ENCODE measurements at regions of chr1 and their contacts with region 1.

Region 1: DNA sequence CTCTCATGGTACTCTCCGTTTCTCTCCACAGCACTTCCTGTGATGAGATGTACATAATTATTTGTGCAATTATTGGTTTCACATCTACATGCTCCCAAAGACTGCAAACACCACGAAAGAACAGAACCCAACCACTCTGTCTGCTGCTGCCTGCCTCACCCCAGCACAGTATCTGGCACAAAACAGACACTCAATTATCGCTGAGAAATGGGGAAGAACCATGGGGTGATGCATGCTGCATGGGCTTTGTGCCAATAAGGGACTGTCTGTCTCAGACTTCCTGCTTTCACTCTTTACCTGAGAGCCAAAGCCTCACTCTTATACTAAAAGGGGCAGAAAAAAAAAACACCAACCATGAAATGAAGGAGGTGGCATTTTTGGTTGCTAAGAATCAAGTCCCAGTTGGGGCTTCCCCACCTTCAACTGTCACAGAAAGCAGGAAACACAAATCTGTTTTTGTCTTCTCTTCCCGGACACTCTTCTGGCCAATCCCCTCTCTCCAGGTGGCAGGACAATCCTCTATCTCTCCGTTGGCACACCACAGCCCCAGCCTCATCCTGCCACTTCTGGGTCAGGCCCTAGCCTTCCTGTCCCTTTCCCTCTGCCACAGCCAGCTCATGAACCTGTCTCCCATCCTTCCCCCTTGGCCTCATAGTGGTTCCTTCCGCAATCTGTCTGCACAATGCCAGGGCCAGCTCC is 82.0 kb downstream of the TGFBR3 start:
- DNase-seq: peak; percentile 45 to 96 (median 77)
- ATAC-seq: peak; percentile 55
- H3K4me3 ChIP-seq: peak overlapping the region; percentile 37 to 51
- H3K4me3 Mint-ChIP-seq: peak overlapping the region; percentile 70
- H3K27ac ChIP-seq: peak overlapping the region; percentile 98 to 99
- H3K27ac Mint-ChIP-seq: peak overlapping the region; percentile 97
- H3K4me1 ChIP-seq: peaks cover 34% of the 10 kb centered on the region
- H3K4me1 Mint-ChIP-seq: peaks cover 52% of the 10 kb centered on the region
- H3K27me3 ChIP-seq: no peaks in the 10 kb centered on the region
- H3K27me3 Mint-ChIP-seq: no peaks in the 10 kb centered on the region
- CTCF ChIP-seq: no peak

Region 2: DNA sequence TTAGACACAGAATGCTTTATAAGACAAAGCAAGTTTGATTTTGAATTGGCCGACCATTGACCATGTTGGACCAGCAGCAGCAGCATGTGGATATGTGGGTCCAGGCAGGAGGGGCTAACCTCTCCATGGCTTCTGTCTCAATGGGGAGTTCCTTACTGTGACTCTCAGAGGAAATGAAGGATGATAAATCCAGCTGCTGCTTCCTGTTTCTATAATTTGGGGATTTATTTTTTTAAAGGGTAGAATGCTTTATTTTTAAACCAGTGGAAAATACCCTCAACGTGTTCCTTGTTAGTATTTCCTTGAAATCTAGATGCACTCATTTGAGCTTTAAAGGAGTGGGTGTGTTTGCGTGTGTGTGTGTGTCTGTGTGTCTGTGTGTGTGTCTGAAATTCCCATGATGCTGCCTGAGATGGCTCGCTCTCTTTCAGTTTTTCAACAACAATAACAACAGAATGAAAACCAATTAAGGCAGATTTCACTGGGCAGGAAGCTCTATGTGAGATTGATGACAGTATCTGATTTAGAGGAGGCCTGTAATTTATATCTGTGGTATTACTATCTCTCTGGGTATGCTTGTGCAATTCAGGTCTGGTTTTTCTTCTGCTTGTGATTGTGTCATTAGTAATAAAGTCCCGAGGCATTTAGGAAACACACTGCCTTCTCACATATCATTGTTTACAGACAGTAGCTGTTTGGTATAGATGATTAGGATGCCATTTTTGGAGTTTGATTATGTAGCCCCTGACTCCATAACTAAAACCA is 1895.1 kb before region 1 on chr1:
- CTCF ChIA-PET with region 1: no interaction called
- POLR2A ChIA-PET with region 1: no interaction called
- intact Hi-C with region 1: no loop called
- DNase-seq: peak in 1 of 9 experiments; percentile 23
- ATAC-seq: no peak
- H3K4me3 ChIP-seq: no peak overlapping the region
- H3K4me3 Mint-ChIP-seq: no peak overlapping the region
- H3K27ac ChIP-seq: no peak overlapping the region
- H3K27ac Mint-ChIP-seq: peak overlapping the region; percentile 37
- H3K4me1 ChIP-seq: no peaks in the 10 kb centered on the region
- H3K4me1 Mint-ChIP-seq: peaks cover 67% of the 10 kb centered on the region
- H3K27me3 ChIP-seq: no peaks in the 10 kb centered on the region
- H3K27me3 Mint-ChIP-seq: no peaks in the 10 kb centered on the region
- CTCF ChIP-seq: no peak

Region 3: GRCh38 chr1:91021686-91022517 is 782.1 kb before region 1 on chr1 and contains the start of gene ZNF644:
- CTCF ChIA-PET with region 1: no interaction called
- POLR2A ChIA-PET with region 1: no interaction called
- intact Hi-C with region 1: loop called in 1 of 2 experiments (anchors 5 kb)
- DNase-seq: peak; percentile 76 to 97 (median 89)
- ATAC-seq: peak; percentile 84
- H3K4me3 ChIP-seq: peak within 1 kb of the TSS; percentile 75 to 98
- H3K4me3 Mint-ChIP-seq: peak within 1 kb of the TSS; percentile 97
- H3K27ac ChIP-seq: peak within 1 kb of the TSS; percentile 99 to 100
- H3K27ac Mint-ChIP-seq: peak within 1 kb of the TSS; percentile 99
- H3K4me1 ChIP-seq: peaks cover 49% of the 10 kb centered on the region
- H3K4me1 Mint-ChIP-seq: peaks cover 64% of the 10 kb centered on the region
- H3K27me3 ChIP-seq: no peaks in the 10 kb centered on the region
- H3K27me3 Mint-ChIP-seq: no peaks in the 10 kb centered on the region
- CTCF ChIP-seq: no peak
- total RNA-seq, gene ZNF644: 105 to 109 TPM

Region 4: GRCh38 chr1:91555821-91556531 is 248.0 kb before region 1 on chr1:
- CTCF ChIA-PET with region 1: no interaction called
- POLR2A ChIA-PET with region 1: no interaction called
- intact Hi-C with region 1: loop called (anchors 1 kb)
- DNase-seq: peak; percentile 29 to 96 (median 59)
- ATAC-seq: peak; percentile 87
- H3K4me3 ChIP-seq: no peak overlapping the region
- H3K4me3 Mint-ChIP-seq: no peak overlapping the region
- H3K27ac ChIP-seq: peak overlapping the region; percentile 49 to 90
- H3K27ac Mint-ChIP-seq: peak overlapping the region; percentile 92
- H3K4me1 ChIP-seq: peaks cover 54% of the 10 kb centered on the region
- H3K4me1 Mint-ChIP-seq: peaks cover 82% of the 10 kb centered on the region
- H3K27me3 ChIP-seq: no peaks in the 10 kb centered on the region
- H3K27me3 Mint-ChIP-seq: no peaks in the 10 kb centered on the region
- CTCF ChIP-seq: no peak

Region 5: GRCh38 chr1:91791103-91791502 is 12.9 kb before region 1 on chr1:
- CTCF ChIA-PET with region 1: interaction called, 15 read pairs
- POLR2A ChIA-PET with region 1: interaction called, 13 read pairs
- intact Hi-C with region 1: no loop called
- DNase-seq: peak in 2 of 9 experiments; percentile 25 to 37
- ATAC-seq: peak; percentile 34
- H3K4me3 ChIP-seq: no peak overlapping the region
- H3K4me3 Mint-ChIP-seq: no peak overlapping the region
- H3K27ac ChIP-seq: peak overlapping the region in 1 of 2 experiments; percentile 58
- H3K27ac Mint-ChIP-seq: peak overlapping the region; percentile 12
- H3K4me1 ChIP-seq: peaks cover 27% of the 10 kb centered on the region
- H3K4me1 Mint-ChIP-seq: peaks cover 37% of the 10 kb centered on the region
- H3K27me3 ChIP-seq: no peaks in the 10 kb centered on the region
- H3K27me3 Mint-ChIP-seq: no peaks in the 10 kb centered on the region
- CTCF ChIP-seq: no peak

Region 6: GRCh38 chr1:91846007-91846617 is 42.1 kb after region 1 on chr1:
- CTCF ChIA-PET with region 1: no interaction called
- POLR2A ChIA-PET with region 1: no interaction called
- intact Hi-C with region 1: no loop called
- DNase-seq: no peak
- ATAC-seq: no peak
- H3K4me3 ChIP-seq: no peak overlapping the region
- H3K4me3 Mint-ChIP-seq: no peak overlapping the region
- H3K27ac ChIP-seq: no peak overlapping the region
- H3K27ac Mint-ChIP-seq: no peak overlapping the region
- H3K4me1 ChIP-seq: no peaks in the 10 kb centered on the region
- H3K4me1 Mint-ChIP-seq: peaks cover 37% of the 10 kb centered on the region
- H3K27me3 ChIP-seq: no peaks in the 10 kb centered on the region
- H3K27me3 Mint-ChIP-seq: no peaks in the 10 kb centered on the region
- CTCF ChIP-seq: no peak

Region 7: DNA sequence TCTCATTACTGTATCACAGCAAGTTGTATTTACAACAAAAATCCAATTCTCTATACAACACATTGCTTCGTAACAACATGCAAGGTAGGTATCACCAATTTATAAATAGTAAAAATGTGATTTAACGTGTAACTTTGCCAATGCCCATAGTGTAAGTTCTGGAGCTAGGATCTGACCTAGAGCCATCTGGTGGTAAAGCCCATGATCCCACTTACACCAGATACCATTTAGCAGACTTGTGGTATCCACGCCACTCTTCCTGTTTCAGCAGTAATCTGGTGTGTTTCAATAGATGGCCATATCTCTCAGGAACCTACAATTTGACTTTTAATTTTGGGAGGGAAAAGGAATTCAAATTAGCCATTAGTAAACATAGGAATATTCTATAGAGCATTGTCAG is 261.0 kb after region 1 on chr1:
- CTCF ChIA-PET with region 1: no interaction called
- POLR2A ChIA-PET with region 1: no interaction called
- intact Hi-C with region 1: no loop called
- DNase-seq: no peak
- ATAC-seq: no peak
- H3K4me3 ChIP-seq: no peak overlapping the region
- H3K4me3 Mint-ChIP-seq: no peak overlapping the region
- H3K27ac ChIP-seq: no peak overlapping the region
- H3K27ac Mint-ChIP-seq: no peak overlapping the region
- H3K4me1 ChIP-seq: no peaks in the 10 kb centered on the region
- H3K4me1 Mint-ChIP-seq: no peaks in the 10 kb centered on the region
- H3K27me3 ChIP-seq: no peaks in the 10 kb centered on the region
- H3K27me3 Mint-ChIP-seq: no peaks in the 10 kb centered on the region
- CTCF ChIP-seq: no peak

Region 8: DNA sequence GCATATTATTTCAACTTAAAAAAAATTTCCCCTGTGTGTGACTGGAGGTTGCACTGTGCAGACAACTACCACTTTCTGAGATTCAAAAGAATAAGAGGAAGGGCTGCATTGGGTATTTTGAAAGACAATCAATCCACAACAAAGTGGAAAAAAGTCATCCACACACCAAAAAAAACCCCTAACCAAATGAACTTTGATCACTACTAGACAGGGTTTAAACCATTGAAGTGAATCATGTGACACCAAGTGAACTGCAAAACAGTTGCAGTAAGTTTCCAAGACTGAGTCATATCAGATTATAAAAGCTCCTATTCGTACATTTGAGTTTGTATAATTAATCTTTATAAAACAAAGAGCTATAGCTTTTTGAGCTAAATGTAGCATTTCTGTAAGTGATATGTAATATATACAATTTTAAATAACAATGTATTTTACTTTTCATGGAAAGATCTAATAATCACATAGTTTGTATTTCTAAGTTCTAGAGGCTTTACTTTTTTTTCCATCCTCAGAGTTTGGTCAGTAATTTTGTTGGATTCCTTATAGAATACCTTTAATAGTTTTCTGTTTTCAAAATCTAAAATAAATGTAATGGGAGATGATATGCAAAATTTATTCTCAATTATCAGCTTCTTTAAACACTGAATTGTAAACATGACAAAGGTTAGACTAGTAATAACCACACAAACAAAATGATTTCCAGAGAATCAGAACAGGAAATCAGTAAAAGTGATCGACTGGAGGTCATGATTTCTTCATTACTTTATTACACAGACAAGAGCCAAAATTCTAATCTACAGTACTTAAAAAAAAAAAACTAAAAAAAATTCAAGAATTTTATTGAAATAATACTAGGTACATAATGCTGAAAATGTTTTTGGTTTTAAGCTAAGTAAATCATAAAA is 733.2 kb after region 1 on chr1:
- CTCF ChIA-PET with region 1: no interaction called
- POLR2A ChIA-PET with region 1: no interaction called
- intact Hi-C with region 1: loop called in 1 of 2 experiments (anchors 2 kb)
- DNase-seq: peak in 3 of 9 experiments; percentile 22 to 86 (median 76)
- ATAC-seq: peak; percentile 78
- H3K4me3 ChIP-seq: peak overlapping the region in 1 of 2 experiments; percentile 9
- H3K4me3 Mint-ChIP-seq: peak overlapping the region; percentile 56
- H3K27ac ChIP-seq: peak overlapping the region; percentile 12 to 83
- H3K27ac Mint-ChIP-seq: peak overlapping the region; percentile 89
- H3K4me1 ChIP-seq: peaks cover 27% of the 10 kb centered on the region
- H3K4me1 Mint-ChIP-seq: peaks cover 60% of the 10 kb centered on the region
- H3K27me3 ChIP-seq: no peaks in the 10 kb centered on the region
- H3K27me3 Mint-ChIP-seq: no peaks in the 10 kb centered on the region
- CTCF ChIP-seq: no peak

Measured in CD8-positive, alpha-beta T cell (primary cell).